Activated CD4-positive, alpha-beta T cell treated with anti-CD3 and anti-CD28 coated beads for 36 hours (primary cell): ENCODE measurements at regions of chr11 and their contacts with region 1.

Region 1: GRCh38 chr11:120108154-120108865 is 29.6 kb downstream of the TRIM29 start:
- DNase-seq: peak; percentile 80
- ATAC-seq: peak; percentile 86
- H3K4me3 Mint-ChIP-seq: no peak overlapping the region
- H3K27ac Mint-ChIP-seq: no peak overlapping the region
- H3K4me1 Mint-ChIP-seq: no peaks in the 10 kb centered on the region
- H3K27me3 Mint-ChIP-seq: peaks cover 4% of the 10 kb centered on the region

Region 2: GRCh38 chr11:119470317-119471291 is 637.7 kb before region 1 on chr11:
- CTCF ChIA-PET with region 1: no interaction called
- POLR2A ChIA-PET with region 1: no interaction called
- intact Hi-C with region 1: no loop called
- DNase-seq: no peak
- ATAC-seq: no peak
- H3K4me3 Mint-ChIP-seq: no peak overlapping the region
- H3K27ac Mint-ChIP-seq: no peak overlapping the region
- H3K4me1 Mint-ChIP-seq: no peaks in the 10 kb centered on the region
- H3K27me3 Mint-ChIP-seq: peaks cover 27% of the 10 kb centered on the region

Region 3: GRCh38 chr11:119641983-119642745 is 466.1 kb before region 1 on chr11:
- CTCF ChIA-PET with region 1: interaction called, 3 read pairs
- POLR2A ChIA-PET with region 1: no interaction called
- intact Hi-C with region 1: loop called in 1 of 2 experiments (anchors 1 kb)
- DNase-seq: peak; percentile 28
- ATAC-seq: no peak
- H3K4me3 Mint-ChIP-seq: no peak overlapping the region
- H3K27ac Mint-ChIP-seq: no peak overlapping the region
- H3K4me1 Mint-ChIP-seq: no peaks in the 10 kb centered on the region
- H3K27me3 Mint-ChIP-seq: peaks cover 6% of the 10 kb centered on the region

Region 4: GRCh38 chr11:119952441-119952840 is 155.9 kb before region 1 on chr11:
- CTCF ChIA-PET with region 1: no interaction called
- POLR2A ChIA-PET with region 1: no interaction called
- intact Hi-C with region 1: no loop called
- DNase-seq: no peak
- ATAC-seq: no peak
- H3K4me3 Mint-ChIP-seq: no peak overlapping the region
- H3K27ac Mint-ChIP-seq: no peak overlapping the region
- H3K4me1 Mint-ChIP-seq: no peaks in the 10 kb centered on the region
- H3K27me3 Mint-ChIP-seq: peaks cover 13% of the 10 kb centered on the region

Region 5: DNA sequence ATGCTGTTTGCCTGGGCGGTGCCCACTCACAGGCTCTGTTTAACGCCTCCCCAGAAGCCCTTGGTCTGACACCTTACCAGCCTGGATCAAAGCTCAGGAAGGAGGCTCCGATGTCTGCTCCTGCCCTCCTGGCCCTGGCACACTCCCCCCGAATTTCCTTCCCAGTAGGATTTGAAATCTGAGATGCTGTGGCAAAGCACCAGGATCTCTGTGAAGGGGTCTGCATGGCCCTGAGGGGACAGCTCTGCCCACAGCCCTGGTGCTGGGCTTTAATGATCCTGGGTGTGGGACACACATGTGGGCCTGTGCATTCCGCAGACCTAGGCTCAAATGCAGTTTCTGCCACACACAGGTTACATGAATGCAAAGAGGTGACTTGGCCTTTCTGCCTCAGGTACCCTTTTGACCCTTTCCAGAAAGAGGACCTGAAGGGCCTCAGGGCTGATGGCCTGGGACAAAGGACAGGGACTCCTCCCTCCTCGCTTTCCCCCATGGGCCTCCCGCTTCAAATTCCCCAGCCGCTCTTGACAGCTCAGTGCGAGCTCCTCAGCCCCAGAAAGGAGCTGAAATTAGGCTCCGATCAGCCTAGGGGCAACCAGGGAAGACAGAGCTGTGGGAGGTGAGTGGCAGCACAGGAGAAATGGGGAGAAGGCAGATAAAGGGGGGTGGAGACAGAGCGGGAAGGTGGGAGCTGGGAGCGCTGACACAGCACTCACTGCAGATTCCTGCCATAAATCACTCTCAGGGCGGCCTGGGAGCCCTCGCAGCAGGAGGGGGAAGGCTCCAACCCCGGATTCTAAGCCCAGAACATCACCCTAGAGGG is 11.7 kb before region 1 on chr11:
- CTCF ChIA-PET with region 1: interaction called, 11 read pairs
- POLR2A ChIA-PET with region 1: no interaction called
- intact Hi-C with region 1: no loop called
- DNase-seq: no peak
- ATAC-seq: no peak
- H3K4me3 Mint-ChIP-seq: no peak overlapping the region
- H3K27ac Mint-ChIP-seq: no peak overlapping the region
- H3K4me1 Mint-ChIP-seq: no peaks in the 10 kb centered on the region
- H3K27me3 Mint-ChIP-seq: peaks cover 8% of the 10 kb centered on the region